ENCODE measurements at regions of chr3 and their contacts with region 1.

Region 1: GRCh38 chr3:134754768-134755559 is 40.1 kb upstream of the EPHB1 start:
- DNase-seq: peak; percentile 91
- H3K4me3 ChIP-seq: no peak overlapping the region
- H3K27ac ChIP-seq: no peak overlapping the region
- H3K4me1 ChIP-seq: no peaks in the 10 kb centered on the region
- H3K27me3 ChIP-seq: no peaks in the 10 kb centered on the region
- CTCF ChIP-seq: peak; percentile 48 to 69 (median 52)
- EP300 ChIP-seq: no peak
- POLR2A ChIP-seq: no peak

Region 2: DNA sequence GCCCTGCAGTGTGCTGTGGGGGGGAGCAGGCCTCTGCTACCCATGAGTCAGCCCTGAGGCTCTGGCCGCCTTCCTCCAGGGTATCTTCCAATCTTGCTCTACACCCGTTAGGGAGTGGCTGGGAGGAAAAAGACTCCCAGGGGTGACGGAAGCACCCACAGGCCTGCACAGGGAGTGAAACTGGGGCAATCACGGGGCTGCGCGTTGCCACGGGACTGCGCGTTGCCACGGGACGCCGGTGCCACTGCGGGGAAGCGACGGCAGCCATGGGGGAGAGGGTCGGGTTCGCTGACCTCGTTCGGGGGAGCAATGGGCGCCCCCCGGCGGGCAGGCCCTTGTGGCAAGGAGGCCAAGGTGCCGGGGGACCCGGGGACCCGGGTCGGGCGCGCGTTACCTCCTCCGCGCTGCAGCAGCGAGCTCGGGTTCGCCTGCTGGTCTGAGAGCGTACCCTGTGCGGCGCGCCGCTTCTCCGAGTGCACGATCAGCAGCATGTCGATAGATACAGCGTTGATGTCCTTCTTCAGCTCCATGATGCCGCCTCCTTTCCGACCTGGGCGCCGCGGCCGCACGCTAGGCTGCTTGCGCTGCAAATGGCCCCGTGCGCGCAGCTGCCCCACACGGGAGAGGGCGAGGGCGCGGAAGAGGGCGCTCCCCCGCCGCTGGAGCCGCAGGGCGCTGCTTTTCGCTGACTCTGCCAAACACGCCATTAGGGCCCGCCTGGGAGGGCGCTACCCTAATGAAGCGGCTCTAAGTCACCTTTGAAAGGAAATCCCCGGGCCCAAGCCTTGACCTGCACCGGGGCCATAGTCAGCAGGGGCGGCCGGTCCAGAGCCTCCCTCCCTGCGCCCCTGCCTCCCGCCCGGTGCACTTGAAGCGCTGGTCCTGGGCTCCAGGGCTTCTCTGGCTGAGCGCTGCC is 104.3 kb before region 1 on chr3 and contains the start of gene KY:
- intact Hi-C with region 1: loop called (anchors 10 kb)
- DNase-seq: peak; percentile 92
- H3K4me3 ChIP-seq: peak within 1 kb of the TSS; percentile 55 to 66 (median 63)
- H3K27ac ChIP-seq: peak within 1 kb of the TSS; percentile 71 to 82 (median 78)
- H3K4me1 ChIP-seq: peaks cover 13 to 35% (median 28%) of the 10 kb centered on the region in 4 donors
- H3K27me3 ChIP-seq: no peaks in the 10 kb centered on the region
- CTCF ChIP-seq: peak; percentile 28 to 52 (median 33)
- EP300 ChIP-seq: no peak
- POLR2A ChIP-seq: no peak
- total RNA-seq, gene KY: 0.33 to 1.9 (median 0.81) TPM

Measured in esophagus muscularis mucosa (tissue), 4 donors.